ENCODE measurements at regions of chr12 and their contacts with region 1.

Region 1: GRCh38 chr12:10884086-10884725 is at the start of gene PRH1:
- DNase-seq: no peak
- ATAC-seq: no peak
- H3K4me3 ChIP-seq: no peak within 1 kb of the TSS
- H3K4me3 Mint-ChIP-seq: no peak within 1 kb of the TSS
- H3K27ac ChIP-seq: no peak within 1 kb of the TSS
- H3K27ac Mint-ChIP-seq: no peak within 1 kb of the TSS
- H3K4me1 ChIP-seq: no peaks in the 10 kb centered on the region
- H3K4me1 Mint-ChIP-seq: peaks cover 0 to 9% (median 0%) of the 10 kb centered on the region in 7 donors
- H3K27me3 ChIP-seq: no peaks in the 10 kb centered on the region
- H3K27me3 Mint-ChIP-seq: no peaks in the 10 kb centered on the region
- total RNA-seq, gene PRH1: 19.9 to 37.8 (median 29.8) TPM

Region 2: GRCh38 chr12:10511756-10512355 is 372.4 kb before region 1 on chr12:
- CTCF ChIA-PET with region 1: no interaction called
- POLR2A ChIA-PET with region 1: no interaction called
- intact Hi-C with region 1: no loop called
- DNase-seq: no peak
- ATAC-seq: no peak
- H3K4me3 ChIP-seq: no peak overlapping the region
- H3K4me3 Mint-ChIP-seq: no peak overlapping the region
- H3K27ac ChIP-seq: no peak overlapping the region
- H3K27ac Mint-ChIP-seq: no peak overlapping the region
- H3K4me1 ChIP-seq: no peaks in the 10 kb centered on the region
- H3K4me1 Mint-ChIP-seq: no peaks in the 10 kb centered on the region
- H3K27me3 ChIP-seq: no peaks in the 10 kb centered on the region
- H3K27me3 Mint-ChIP-seq: peaks cover 13 to 20% (median 17%) of the 10 kb centered on the region in 5 donors

Region 3: GRCh38 chr12:10807186-10807585 is 77.0 kb before region 1 on chr12 and contains the start of gene TAS2R8:
- CTCF ChIA-PET with region 1: no interaction called
- POLR2A ChIA-PET with region 1: no interaction called
- intact Hi-C with region 1: no loop called
- DNase-seq: no peak
- ATAC-seq: no peak
- H3K4me3 ChIP-seq: no peak within 1 kb of the TSS
- H3K4me3 Mint-ChIP-seq: no peak within 1 kb of the TSS
- H3K27ac ChIP-seq: no peak within 1 kb of the TSS
- H3K27ac Mint-ChIP-seq: no peak within 1 kb of the TSS
- H3K4me1 ChIP-seq: no peaks in the 10 kb centered on the region
- H3K4me1 Mint-ChIP-seq: no peaks in the 10 kb centered on the region
- H3K27me3 ChIP-seq: no peaks in the 10 kb centered on the region
- H3K27me3 Mint-ChIP-seq: peaks cover 23 to 44% (median 32%) of the 10 kb centered on the region in 5 donors
- total RNA-seq, gene TAS2R8: not detected

Region 4: DNA sequence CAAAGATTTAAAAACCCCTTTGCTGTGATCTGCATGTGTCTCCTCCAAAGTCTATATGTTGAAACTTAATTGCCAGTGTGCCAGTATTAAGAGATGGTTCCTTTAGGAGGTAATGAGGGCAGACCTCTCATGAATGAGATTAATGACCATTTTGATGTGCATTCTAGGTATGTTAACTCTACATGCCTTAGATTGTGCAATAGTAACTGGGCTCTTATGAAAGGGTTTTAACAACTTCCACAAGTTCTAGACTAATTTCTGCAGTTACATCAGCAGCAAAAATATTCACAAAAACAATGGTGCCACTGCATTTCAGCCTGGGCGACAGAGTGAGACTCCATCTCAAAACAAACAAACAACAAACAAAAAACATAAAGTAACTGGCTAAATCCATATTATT is 54.2 kb before region 1 on chr12:
- CTCF ChIA-PET with region 1: no interaction called
- POLR2A ChIA-PET with region 1: no interaction called
- intact Hi-C with region 1: loop called in 1 of 2 experiments (anchors 5 kb)
- DNase-seq: no peak
- ATAC-seq: no peak
- H3K4me3 ChIP-seq: no peak overlapping the region
- H3K4me3 Mint-ChIP-seq: no peak overlapping the region
- H3K27ac ChIP-seq: no peak overlapping the region
- H3K27ac Mint-ChIP-seq: no peak overlapping the region
- H3K4me1 ChIP-seq: no peaks in the 10 kb centered on the region
- H3K4me1 Mint-ChIP-seq: no peaks in the 10 kb centered on the region
- H3K27me3 ChIP-seq: no peaks in the 10 kb centered on the region
- H3K27me3 Mint-ChIP-seq: no peaks in the 10 kb centered on the region